ENCODE measurements at regions of chr6 and their contacts with region 1.

Region 1: GRCh38 chr6:125974214-125974866 is 12.0 kb upstream of the TRMT11 start:
- DNase-seq: no peak
- H3K4me3 Mint-ChIP-seq: no peak overlapping the region
- H3K27ac Mint-ChIP-seq: no peak overlapping the region
- H3K4me1 Mint-ChIP-seq: peaks cover 6% of the 10 kb centered on the region
- H3K27me3 Mint-ChIP-seq: no peaks in the 10 kb centered on the region

Region 2: DNA sequence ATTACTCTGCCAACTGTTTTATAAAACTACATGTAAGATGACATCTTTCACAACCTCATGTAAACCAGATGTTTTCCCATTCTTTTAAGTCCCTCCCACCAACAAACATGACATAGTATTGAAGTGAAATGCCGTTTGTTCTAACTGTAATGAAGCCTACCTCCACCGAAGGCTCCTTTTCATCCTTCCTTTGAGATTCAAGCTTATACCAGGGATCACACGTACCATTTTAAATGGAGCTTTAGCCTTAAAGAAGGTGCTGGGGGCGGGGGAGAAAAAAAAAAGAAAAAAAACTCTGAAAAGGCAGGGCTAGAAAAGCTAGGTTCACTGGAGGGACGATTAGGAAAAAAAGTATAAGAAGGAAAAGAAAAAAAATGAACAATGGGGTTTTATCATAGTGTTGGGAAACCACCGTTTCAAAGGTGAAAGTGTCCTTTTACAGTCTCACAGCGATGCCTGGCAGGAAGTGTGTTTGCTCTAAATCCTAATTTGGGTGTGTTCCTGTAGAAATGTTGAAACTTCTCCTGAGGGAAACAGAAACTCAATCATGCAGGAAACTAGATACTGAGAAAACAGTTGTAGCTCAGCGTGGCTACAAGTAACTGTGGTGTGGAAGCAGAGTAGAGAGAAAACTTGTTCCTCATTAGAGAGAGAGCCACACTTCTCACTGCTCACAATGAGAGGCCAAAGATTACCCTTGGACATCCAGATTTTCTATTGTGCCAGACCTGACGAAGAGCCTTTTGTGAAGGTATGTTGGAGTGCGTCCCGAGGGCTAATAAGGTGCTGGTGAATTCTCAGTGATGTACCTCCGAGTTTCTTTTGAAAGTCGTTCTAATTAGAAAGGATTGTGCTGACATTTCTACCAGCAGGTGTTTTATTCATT is 55.4 kb before region 1 on chr6:
- CTCF ChIA-PET with region 1: no interaction called
- POLR2A ChIA-PET with region 1: no interaction called
- DNase-seq: peak; percentile 70
- H3K4me3 Mint-ChIP-seq: peak overlapping the region; percentile 84
- H3K27ac Mint-ChIP-seq: peak overlapping the region; percentile 95
- H3K4me1 Mint-ChIP-seq: peaks cover 56% of the 10 kb centered on the region
- H3K27me3 Mint-ChIP-seq: no peaks in the 10 kb centered on the region

Region 3: GRCh38 chr6:125986300-125987025 is 12.1 kb after region 1 on chr6 and contains the start of gene TRMT11:
- CTCF ChIA-PET with region 1: interaction called, 12 read pairs
- POLR2A ChIA-PET with region 1: interaction called, 4 read pairs
- DNase-seq: peak; percentile 80
- H3K4me3 Mint-ChIP-seq: no peak within 1 kb of the TSS
- H3K27ac Mint-ChIP-seq: no peak within 1 kb of the TSS
- H3K4me1 Mint-ChIP-seq: peaks cover 15% of the 10 kb centered on the region
- H3K27me3 Mint-ChIP-seq: no peaks in the 10 kb centered on the region
- total RNA-seq, gene TRMT11: 15.1 to 16.3 TPM

Region 4: GRCh38 chr6:126318793-126319192 is 344.5 kb after region 1 on chr6:
- CTCF ChIA-PET with region 1: no interaction called
- POLR2A ChIA-PET with region 1: no interaction called
- DNase-seq: no peak
- H3K4me3 Mint-ChIP-seq: no peak overlapping the region
- H3K27ac Mint-ChIP-seq: no peak overlapping the region
- H3K4me1 Mint-ChIP-seq: no peaks in the 10 kb centered on the region
- H3K27me3 Mint-ChIP-seq: peaks cover 29% of the 10 kb centered on the region

Region 5: GRCh38 chr6:126372626-126373025 is 398.3 kb after region 1 on chr6:
- CTCF ChIA-PET with region 1: no interaction called
- POLR2A ChIA-PET with region 1: no interaction called
- DNase-seq: no peak
- H3K4me3 Mint-ChIP-seq: no peak overlapping the region
- H3K27ac Mint-ChIP-seq: no peak overlapping the region
- H3K4me1 Mint-ChIP-seq: no peaks in the 10 kb centered on the region
- H3K27me3 Mint-ChIP-seq: no peaks in the 10 kb centered on the region